Testis (tissue), 5 donors: ENCODE measurements at regions of chr2 and their contacts with region 1.

Region 1: DNA sequence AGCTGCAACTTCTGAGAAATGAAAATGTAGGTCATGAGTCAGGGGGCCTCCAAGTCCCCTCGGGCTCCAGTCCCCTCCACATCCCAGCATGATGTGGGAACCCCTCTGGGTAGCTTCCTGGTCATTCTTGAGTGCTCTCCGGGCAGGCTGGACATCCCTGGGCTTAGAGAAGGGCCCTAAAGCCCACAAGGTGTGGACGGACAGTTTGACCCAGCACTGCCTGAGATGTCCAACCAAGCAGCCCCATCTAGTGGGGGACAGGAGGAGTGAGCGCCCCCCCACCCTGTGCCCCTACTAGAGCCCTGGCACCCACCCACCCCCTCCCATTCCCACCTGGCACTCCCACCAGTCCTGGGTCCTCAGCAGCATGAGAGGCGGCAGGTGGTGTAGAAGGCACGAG is 46.0 kb downstream of the CYP27C1 start:
- DNase-seq: no peak
- H3K4me3 ChIP-seq: no peak overlapping the region
- H3K27ac ChIP-seq: no peak overlapping the region
- H3K4me1 ChIP-seq: peaks cover 22% of the 10 kb centered on the region
- H3K27me3 ChIP-seq: no peaks in the 10 kb centered on the region
- CTCF ChIP-seq: no peak
- POLR2A ChIP-seq: no peak

Region 2: GRCh38 chr2:127086990-127087790 is 86.9 kb before region 1 on chr2:
- intact Hi-C with region 1: loop called (anchors 10 kb)
- DNase-seq: peak; percentile 78
- H3K4me3 ChIP-seq: no peak overlapping the region
- H3K27ac ChIP-seq: peak overlapping the region; percentile 72 to 83
- H3K4me1 ChIP-seq: peaks cover 55% of the 10 kb centered on the region
- H3K27me3 ChIP-seq: no peaks in the 10 kb centered on the region
- CTCF ChIP-seq: no peak
- POLR2A ChIP-seq: no peak